Naive thymus-derived CD4-positive, alpha-beta T cell (primary cell): ENCODE measurements at regions of chr12 and their contacts with region 1.

Region 1: DNA sequence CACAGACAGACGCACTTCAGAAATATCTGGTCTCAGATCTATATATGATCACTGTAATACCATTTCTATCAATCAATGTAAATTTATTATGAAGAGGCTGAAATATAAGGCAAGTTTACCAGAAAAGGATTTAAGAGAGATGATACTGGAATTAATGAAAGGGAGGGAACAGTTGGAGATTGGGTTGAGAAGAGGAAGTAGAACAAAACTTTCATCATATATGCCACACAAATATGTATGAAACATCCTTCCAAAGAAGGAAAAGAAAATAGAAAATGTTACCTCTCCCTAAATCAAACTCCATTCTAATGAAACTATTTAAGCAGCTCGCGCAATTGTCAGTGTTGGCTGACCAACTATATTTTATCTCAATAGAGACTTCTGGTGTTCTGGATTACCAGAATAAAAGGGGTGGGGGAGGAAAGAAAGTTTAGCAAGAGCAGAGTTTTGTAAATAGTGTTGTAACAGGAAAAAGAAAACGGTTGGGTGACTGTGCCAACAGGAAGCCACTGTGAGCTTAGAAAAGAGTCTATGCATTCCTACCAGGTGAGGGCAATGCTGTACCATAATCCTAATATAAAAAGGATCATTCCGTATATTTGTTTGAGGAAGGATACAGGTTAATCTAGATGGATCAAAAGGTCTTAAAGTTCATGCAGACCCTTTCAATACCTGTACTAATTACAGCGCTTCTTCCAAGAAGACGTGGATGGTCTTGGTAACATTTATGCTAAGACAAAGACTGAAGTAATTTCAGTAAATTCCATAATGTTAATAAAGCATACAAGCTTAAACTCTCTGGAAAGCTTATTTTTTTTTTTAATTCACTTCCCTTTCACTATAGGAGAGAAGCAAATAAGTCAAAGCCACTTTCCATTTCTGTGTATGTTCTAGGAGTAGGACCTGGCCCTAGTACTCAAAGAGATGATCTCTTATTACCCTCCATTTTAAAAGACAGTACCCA is 14.5 kb upstream of the LLPH start:
- DNase-seq: peak in 4 of 9 donors; percentile 10 to 32 (median 14)
- ATAC-seq: peak; percentile 86
- H3K4me3 ChIP-seq: no peak overlapping the region
- H3K4me3 Mint-ChIP-seq: peak overlapping the region in 1 of 10 donors; percentile 15
- H3K27ac ChIP-seq: no peak overlapping the region
- H3K27ac Mint-ChIP-seq: peak overlapping the region; percentile 3 to 86 (median 66)
- H3K4me1 ChIP-seq: peaks cover 0 to 3% of the 10 kb centered on the region in 2 donors
- H3K4me1 Mint-ChIP-seq: peaks cover 4 to 35% (median 30%) of the 10 kb centered on the region in 7 donors
- H3K27me3 ChIP-seq: no peaks in the 10 kb centered on the region
- H3K27me3 Mint-ChIP-seq: no peaks in the 10 kb centered on the region

Region 2: GRCh38 chr12:66130277-66131066 is 14.6 kb before region 1 on chr12 and contains the start of gene LLPH:
- CTCF ChIA-PET with region 1: interaction called, 5 read pairs
- POLR2A ChIA-PET with region 1: interaction called, 15 read pairs
- intact Hi-C with region 1: no loop called
- DNase-seq: peak; percentile 72 to 88 (median 86)
- ATAC-seq: peak; percentile 97
- H3K4me3 ChIP-seq: peak within 1 kb of the TSS; percentile 99
- H3K4me3 Mint-ChIP-seq: peak within 1 kb of the TSS; percentile 92 to 98 (median 97)
- H3K27ac ChIP-seq: peak within 1 kb of the TSS; percentile 87
- H3K27ac Mint-ChIP-seq: peak within 1 kb of the TSS; percentile 95 to 99 (median 97)
- H3K4me1 ChIP-seq: peaks cover 19 to 23% of the 10 kb centered on the region in 2 donors
- H3K4me1 Mint-ChIP-seq: peaks cover 37 to 76% (median 63%) of the 10 kb centered on the region in 7 donors
- H3K27me3 ChIP-seq: no peaks in the 10 kb centered on the region
- H3K27me3 Mint-ChIP-seq: no peaks in the 10 kb centered on the region
- total RNA-seq, gene LLPH: 14.7 to 29.1 (median 28.4) TPM

Region 3: GRCh38 chr12:66269757-66270383 is 124.8 kb after region 1 on chr12:
- CTCF ChIA-PET with region 1: interaction called, 3 read pairs
- POLR2A ChIA-PET with region 1: no interaction called
- intact Hi-C with region 1: loop called in 1 of 2 experiments (anchors 5 kb)
- DNase-seq: peak in 7 of 9 donors; percentile 20 to 62 (median 52)
- ATAC-seq: peak; percentile 72
- H3K4me3 ChIP-seq: no peak overlapping the region
- H3K4me3 Mint-ChIP-seq: no peak overlapping the region
- H3K27ac ChIP-seq: no peak overlapping the region
- H3K27ac Mint-ChIP-seq: peak overlapping the region in 1 of 9 donors; percentile 55
- H3K4me1 ChIP-seq: peaks cover 0 to 13% of the 10 kb centered on the region in 2 donors
- H3K4me1 Mint-ChIP-seq: peaks cover 6 to 22% (median 9%) of the 10 kb centered on the region in 7 donors
- H3K27me3 ChIP-seq: no peaks in the 10 kb centered on the region
- H3K27me3 Mint-ChIP-seq: no peaks in the 10 kb centered on the region

Region 4: DNA sequence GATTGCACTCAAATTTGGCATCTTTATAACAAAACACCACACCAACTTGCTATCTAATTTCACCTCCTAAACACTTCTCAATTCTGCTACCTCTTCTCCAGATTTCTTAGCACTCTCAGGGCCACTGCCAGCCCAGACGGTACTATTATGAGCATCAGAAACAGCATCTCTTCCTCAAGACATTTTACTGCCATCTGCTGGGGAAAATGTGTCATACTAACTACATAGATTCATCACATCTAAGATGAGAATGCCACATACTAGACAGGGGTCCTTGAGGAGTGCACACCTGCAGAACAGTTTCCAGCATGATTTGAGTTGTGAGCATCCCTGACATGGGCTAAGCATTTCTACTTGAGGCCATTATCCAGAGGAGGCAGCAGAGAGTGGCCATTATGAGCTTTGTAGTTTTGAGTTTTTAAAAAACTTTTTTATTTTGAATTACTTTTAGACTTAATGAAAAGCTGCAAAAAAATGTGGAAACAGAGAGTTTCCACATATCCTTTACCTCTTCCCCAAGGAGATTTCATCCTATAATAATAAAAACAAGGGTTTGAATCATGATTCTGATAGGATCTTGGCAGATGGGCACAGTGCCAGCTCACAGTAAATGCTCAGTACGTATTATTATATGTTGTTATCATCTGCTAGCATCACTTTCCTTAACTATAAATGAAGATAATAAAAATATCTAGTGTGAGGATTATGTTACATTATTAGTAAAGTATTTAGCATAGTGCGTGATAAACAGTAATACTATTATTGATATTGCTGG is 549.0 kb after region 1 on chr12:
- CTCF ChIA-PET with region 1: no interaction called
- POLR2A ChIA-PET with region 1: no interaction called
- intact Hi-C with region 1: loop called (anchors 1 to 5 kb)
- DNase-seq: peak in 7 of 9 donors; percentile 25 to 57 (median 50)
- ATAC-seq: peak; percentile 89
- H3K4me3 ChIP-seq: no peak overlapping the region
- H3K4me3 Mint-ChIP-seq: no peak overlapping the region
- H3K27ac ChIP-seq: no peak overlapping the region
- H3K27ac Mint-ChIP-seq: no peak overlapping the region
- H3K4me1 ChIP-seq: no peaks in the 10 kb centered on the region
- H3K4me1 Mint-ChIP-seq: peaks cover 3 to 24% (median 18%) of the 10 kb centered on the region in 7 donors
- H3K27me3 ChIP-seq: no peaks in the 10 kb centered on the region
- H3K27me3 Mint-ChIP-seq: peaks cover 0 to 8% (median 0%) of the 10 kb centered on the region in 5 donors

Region 5: DNA sequence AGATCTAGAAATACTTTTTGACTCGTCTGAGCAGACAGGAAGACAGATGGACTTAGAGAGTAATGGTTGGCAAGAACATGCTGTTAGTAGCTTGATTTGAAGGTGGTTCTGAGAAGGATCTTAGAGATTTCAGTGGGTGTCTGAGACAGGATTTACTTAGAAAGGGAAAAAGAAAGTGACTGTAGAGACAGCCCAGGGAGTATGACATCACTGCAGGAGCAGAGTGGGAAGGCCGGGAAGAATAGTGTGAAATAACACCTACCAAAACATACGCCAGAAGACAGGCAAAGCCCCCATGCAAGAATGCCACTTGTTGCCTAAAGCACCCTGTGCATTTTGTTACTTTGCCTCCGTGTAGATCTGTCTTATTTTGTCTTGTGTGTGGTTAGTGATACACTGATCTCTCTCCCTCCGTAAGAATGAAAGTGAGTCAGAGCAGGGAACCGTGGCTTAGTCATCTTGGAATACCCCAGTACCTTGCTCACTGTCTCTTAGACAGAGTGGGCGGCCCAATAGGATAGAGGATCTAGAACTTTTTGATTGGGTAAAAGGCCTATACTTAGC is 1682.8 kb after region 1 on chr12:
- CTCF ChIA-PET with region 1: no interaction called
- POLR2A ChIA-PET with region 1: no interaction called
- intact Hi-C with region 1: no loop called
- DNase-seq: peak in 1 of 9 donors; percentile 39
- ATAC-seq: peak; percentile 60
- H3K4me3 ChIP-seq: no peak overlapping the region
- H3K4me3 Mint-ChIP-seq: peak overlapping the region in 2 of 10 donors; percentile 1 to 26
- H3K27ac ChIP-seq: no peak overlapping the region
- H3K27ac Mint-ChIP-seq: peak overlapping the region in 1 of 9 donors; percentile 0
- H3K4me1 ChIP-seq: no peaks in the 10 kb centered on the region
- H3K4me1 Mint-ChIP-seq: peaks cover 0 to 10% (median 0%) of the 10 kb centered on the region in 7 donors
- H3K27me3 ChIP-seq: no peaks in the 10 kb centered on the region
- H3K27me3 Mint-ChIP-seq: no peaks in the 10 kb centered on the region